ENCODE measurements at regions of chr1 and their contacts with region 1.

Region 1: GRCh38 chr1:117758444-117759316 is 152.8 kb downstream of the TENT5C start:
- DNase-seq: peak; percentile 39 to 71
- ATAC-seq: peak; percentile 88 to 96 (median 93)
- H3K4me3 ChIP-seq: peak overlapping the region in 9 of 10 donors; percentile 14 to 62 (median 53)
- H3K27ac ChIP-seq: peak overlapping the region in 1 of 10 donors; percentile 37
- H3K4me1 ChIP-seq: peaks cover 0 to 18% (median 3%) of the 10 kb centered on the region in 9 donors
- H3K27me3 ChIP-seq: no peaks in the 10 kb centered on the region
- CTCF ChIP-seq: peak; percentile 78 to 91 (median 87)

Region 2: DNA sequence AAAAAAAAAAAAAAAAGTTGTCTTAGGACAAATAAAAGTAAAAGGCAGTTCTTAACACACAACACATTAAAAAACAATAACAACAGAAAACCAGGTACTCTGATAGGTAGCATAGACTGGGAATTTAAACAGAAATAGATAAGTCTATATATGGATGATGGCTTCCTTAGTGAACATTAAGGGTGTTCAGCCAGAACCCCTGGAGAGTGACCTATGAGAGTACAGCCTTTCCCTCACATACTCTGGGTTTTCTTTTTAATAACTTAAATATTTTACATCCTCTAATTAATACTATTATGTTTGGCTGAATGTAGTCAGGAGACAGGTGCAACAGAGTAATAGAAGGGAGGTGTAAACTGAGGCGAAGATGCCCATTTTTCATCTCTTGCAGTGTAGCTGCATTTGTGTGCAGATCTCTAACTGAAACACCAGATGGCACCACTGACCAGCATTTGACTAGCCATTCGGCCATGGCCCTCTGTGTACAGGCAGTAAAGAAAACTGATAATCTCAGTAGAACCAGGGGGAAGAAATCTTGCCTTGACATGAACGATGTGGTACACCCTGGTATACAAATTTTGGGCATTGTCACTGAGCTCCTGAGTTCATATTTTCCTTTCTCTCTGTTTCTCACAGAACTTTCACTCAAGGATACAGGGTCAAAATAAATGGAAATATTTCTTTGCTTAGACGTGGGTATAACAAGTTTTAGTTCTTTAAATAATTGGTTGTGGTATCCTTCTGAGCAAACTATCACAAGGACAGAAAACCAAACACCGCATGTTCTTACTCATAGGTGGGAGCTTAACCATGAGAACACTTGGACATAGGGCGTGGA is 690.9 kb before region 1 on chr1:
- intact Hi-C with region 1: loop called in 6 of 10 experiments (anchors 5 to 10 kb)
- DNase-seq: peak in 1 of 2 donors; percentile 44
- ATAC-seq: peak; percentile 84 to 92 (median 88)
- H3K4me3 ChIP-seq: no peak overlapping the region
- H3K27ac ChIP-seq: no peak overlapping the region
- H3K4me1 ChIP-seq: no peaks in the 10 kb centered on the region
- H3K27me3 ChIP-seq: no peaks in the 10 kb centered on the region
- CTCF ChIP-seq: peak; percentile 47 to 86 (median 80)

Region 3: GRCh38 chr1:117534995-117535467 is 223.6 kb before region 1 on chr1:
- intact Hi-C with region 1: loop called (anchors 1 to 5 kb)
- DNase-seq: peak in 1 of 2 donors; percentile 18
- ATAC-seq: peak; percentile 76 to 92 (median 87)
- H3K4me3 ChIP-seq: no peak overlapping the region
- H3K27ac ChIP-seq: no peak overlapping the region
- H3K4me1 ChIP-seq: peaks cover 0 to 8% (median 0%) of the 10 kb centered on the region in 9 donors
- H3K27me3 ChIP-seq: no peaks in the 10 kb centered on the region
- CTCF ChIP-seq: peak; percentile 31 to 74 (median 66)

Region 4: DNA sequence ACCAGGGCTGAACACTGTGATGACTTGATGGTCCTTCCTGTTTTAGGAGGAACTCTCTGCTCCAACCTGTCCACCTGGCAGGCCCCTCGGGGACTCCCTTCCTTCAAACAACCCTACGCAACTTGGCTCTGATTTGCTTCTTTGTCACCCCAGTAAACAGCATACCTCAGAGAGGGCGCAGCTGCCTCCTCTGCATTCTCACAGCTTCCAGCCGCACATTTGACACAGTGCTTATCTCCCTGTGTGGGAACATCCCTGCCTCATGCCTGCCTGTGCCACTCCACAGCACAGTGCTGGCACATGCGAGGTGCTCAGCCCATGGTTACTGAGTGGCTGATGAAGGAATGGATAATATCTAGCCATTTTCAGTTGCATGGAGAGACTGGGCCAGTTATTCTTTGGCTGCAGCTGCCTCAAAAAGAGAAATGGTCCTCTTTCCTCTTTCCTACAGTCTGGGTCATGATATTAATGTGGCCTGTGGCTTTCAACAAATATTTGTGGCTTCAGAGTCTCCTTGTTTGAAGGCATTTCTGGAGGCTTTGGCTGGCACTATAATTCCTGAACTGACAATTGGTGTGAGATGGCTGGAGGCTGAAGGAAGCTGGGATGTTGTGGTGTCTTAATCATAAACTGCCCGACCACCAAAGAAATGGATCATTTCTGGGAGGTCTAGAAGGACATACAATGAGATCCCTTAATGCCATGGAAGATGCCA is 75.0 kb before region 1 on chr1:
- intact Hi-C with region 1: loop called in 1 of 10 experiments (anchors 5 kb)
- DNase-seq: peak in 1 of 2 donors; percentile 27
- ATAC-seq: peak in 7 of 8 donors; percentile 31 to 80 (median 60)
- H3K4me3 ChIP-seq: no peak overlapping the region
- H3K27ac ChIP-seq: peak overlapping the region in 7 of 10 donors; percentile 22 to 91 (median 89)
- H3K4me1 ChIP-seq: peaks cover 7 to 56% (median 28%) of the 10 kb centered on the region in 9 donors
- H3K27me3 ChIP-seq: no peaks in the 10 kb centered on the region
- CTCF ChIP-seq: no peak

Region 5: DNA sequence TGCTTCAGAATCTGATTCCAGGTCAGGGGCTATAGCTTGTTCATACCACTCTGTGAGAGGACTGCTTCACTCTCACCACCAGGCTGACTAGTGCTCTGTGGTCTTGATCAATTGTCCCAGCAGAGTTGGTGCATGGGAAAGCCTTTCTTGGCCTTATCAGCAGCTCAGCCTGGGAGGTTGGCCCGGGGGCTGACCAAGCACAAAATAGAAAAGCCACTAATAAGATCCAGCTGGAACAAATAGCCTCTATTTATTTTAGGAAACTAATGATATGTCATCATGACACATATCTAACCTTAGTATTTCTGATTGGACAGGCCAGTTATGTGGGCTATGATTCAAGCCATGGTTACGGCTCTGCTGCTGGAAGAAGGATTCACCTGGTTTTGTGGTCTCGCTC is 36.5 kb after region 1 on chr1:
- intact Hi-C with region 1: no loop called
- DNase-seq: peak; percentile 22 to 23
- ATAC-seq: peak; percentile 71 to 92 (median 83)
- H3K4me3 ChIP-seq: no peak overlapping the region
- H3K27ac ChIP-seq: peak overlapping the region in 6 of 10 donors; percentile 6 to 67 (median 46)
- H3K4me1 ChIP-seq: peaks cover 2 to 32% (median 22%) of the 10 kb centered on the region in 9 donors
- H3K27me3 ChIP-seq: no peaks in the 10 kb centered on the region
- CTCF ChIP-seq: peak in 2 of 9 donors; percentile 5 to 18

Region 6: DNA sequence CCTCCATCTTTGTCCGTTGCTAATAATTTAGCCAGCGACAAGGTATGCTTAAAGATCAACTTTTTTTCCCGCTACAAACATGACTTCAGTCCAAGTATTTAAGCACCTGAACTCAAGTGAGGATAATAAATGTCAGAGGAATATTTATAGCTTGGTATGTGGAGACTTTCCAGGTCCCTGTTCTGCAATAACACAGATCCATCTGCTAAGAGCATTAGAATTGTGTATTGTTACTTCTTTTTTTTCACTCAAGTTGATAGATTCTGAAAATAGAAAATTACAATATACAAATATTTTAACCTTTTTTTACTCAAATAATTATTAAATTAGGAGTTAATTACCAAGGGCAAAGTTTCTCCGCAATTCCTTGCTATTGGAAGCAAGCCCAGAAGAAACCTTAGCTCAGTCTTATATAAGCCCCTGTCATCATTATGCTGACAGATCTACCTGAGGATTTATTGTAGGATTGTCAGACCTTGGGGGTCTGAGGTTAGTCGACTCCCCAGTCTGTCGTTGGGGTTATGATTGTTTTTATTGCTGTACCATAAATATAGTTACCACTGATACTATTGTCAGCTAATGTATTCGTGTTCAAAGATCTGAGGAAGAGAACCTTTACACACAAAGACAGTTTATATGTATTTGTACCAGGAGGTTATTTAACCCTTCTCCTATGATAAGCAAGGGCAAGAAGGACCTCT is 891.6 kb after region 1 on chr1:
- intact Hi-C with region 1: no loop called
- DNase-seq: no peak
- ATAC-seq: peak in 5 of 8 donors; percentile 33 to 75 (median 70)
- H3K4me3 ChIP-seq: no peak overlapping the region
- H3K27ac ChIP-seq: peak overlapping the region in 2 of 10 donors; percentile 29 to 49
- H3K4me1 ChIP-seq: peaks cover 0 to 10% (median 0%) of the 10 kb centered on the region in 9 donors
- H3K27me3 ChIP-seq: no peaks in the 10 kb centered on the region
- CTCF ChIP-seq: no peak